ENCODE measurements at regions of chr2 and their contacts with region 1.

Region 1: DNA sequence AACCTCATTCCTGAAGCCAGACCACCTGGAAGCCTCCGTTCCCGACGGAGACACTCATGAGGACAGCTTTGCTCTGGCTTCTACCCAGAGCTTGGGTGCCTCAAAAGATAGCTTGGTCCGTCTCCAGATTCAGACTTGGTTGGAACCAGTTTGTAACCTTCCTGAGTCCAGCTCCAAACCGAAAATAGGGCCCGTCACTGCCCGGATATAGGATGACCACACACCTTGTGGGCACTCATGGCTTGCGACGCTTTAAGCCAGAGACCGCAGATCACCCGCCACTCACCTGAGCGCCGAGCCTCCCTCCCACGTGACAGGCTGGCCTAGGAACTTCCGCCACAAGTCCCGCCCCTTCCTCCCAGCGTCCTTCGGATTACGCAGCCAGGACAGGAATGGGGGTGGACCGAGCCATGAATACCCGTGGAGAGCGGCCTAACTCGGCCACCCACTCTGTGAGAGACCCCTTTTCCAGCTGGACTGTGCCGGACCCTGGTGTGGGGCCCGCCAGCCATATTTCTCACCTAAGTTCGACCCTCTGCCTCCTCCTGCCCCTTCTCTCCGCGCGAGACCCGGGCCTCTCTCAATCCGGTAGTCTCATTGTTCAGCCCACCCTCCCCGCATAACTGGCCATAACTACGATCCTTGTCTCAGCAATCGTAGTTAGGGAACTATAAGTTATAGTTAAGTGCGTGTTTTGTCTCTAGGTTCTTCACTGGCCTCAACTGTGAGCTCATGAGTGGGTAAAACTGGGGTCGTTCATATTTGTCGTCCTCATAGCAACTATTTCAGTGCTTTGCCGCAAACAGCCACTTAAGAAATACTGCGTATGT is at the start of gene MPV17:
- DNase-seq: peak; percentile 98
- H3K4me3 ChIP-seq: peak within 1 kb of the TSS; percentile 76 to 93
- H3K27ac ChIP-seq: peak within 1 kb of the TSS; percentile 90 to 98
- H3K4me1 ChIP-seq: peaks cover 9 to 23% of the 10 kb centered on the region in 2 experiments; a peak in 3 of 4 replicates
- H3K27me3 ChIP-seq: no peaks in the 10 kb centered on the region
- CTCF ChIP-seq: no peak
- EP300 ChIP-seq: no peak
- RAD21 ChIP-seq: no peak
- polyA plus RNA-seq, gene MPV17: 255 and 265 TPM in 2 replicates

Region 2: GRCh38 chr2:27209621-27210401 is 113.2 kb before region 1 on chr2:
- CTCF ChIA-PET with region 1: no interaction called
- POLR2A ChIA-PET with region 1: no interaction called
- DNase-seq: no peak
- H3K4me3 ChIP-seq: no peak overlapping the region
- H3K27ac ChIP-seq: peak overlapping the region in 1 of 2 experiments; percentile 25; a peak in 1 of 4 replicates
- H3K4me1 ChIP-seq: peaks cover 5 to 22% of the 10 kb centered on the region in 2 experiments; a peak in 2 of 4 replicates
- H3K27me3 ChIP-seq: no peaks in the 10 kb centered on the region
- CTCF ChIP-seq: no peak
- EP300 ChIP-seq: no peak
- RAD21 ChIP-seq: no peak

Region 3: DNA sequence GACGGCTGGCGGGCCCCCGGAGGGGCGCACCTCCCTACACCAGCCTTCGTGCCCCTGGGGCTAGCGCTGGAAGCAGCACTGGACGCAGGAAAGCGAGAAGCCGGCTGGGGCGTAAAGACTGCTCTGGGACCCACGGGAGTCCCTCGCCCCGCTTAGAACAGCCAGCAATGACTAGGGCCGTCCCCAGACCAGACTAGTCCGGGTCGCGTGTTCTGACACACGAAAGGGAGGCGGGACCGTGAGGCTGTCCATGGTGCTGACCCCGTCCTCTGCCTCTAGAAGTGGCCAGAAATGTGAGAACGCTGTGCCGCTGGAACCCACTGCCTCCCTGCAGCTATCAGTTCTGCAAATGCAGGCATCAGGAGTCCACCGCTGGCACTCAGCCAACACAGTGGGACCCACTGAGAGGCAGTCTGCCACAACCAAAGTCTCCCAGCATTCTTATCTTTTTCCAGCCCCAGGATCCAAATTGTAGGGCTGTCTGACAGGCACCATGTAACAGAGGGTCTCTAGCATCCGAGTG is 14.6 kb before region 1 on chr2 and contains the start of gene UCN:
- CTCF ChIA-PET with region 1: interaction called, 27 read pairs
- POLR2A ChIA-PET with region 1: interaction called, 6 read pairs
- DNase-seq: peak; percentile 82
- H3K4me3 ChIP-seq: no peak within 1 kb of the TSS; a peak in 1 of 4 replicates
- H3K27ac ChIP-seq: no peak within 1 kb of the TSS
- H3K4me1 ChIP-seq: peaks cover 0 to 18% of the 10 kb centered on the region in 2 experiments; a peak in 1 of 4 replicates
- H3K27me3 ChIP-seq: peaks cover 15% of the 10 kb centered on the region; the same call in 1 of the 2 replicates
- CTCF ChIP-seq: no peak
- EP300 ChIP-seq: no peak
- RAD21 ChIP-seq: no peak
- polyA plus RNA-seq, gene UCN: 2.8 and 2.9 TPM in 2 replicates

Region 4: GRCh38 chr2:27356382-27357181 is 33.6 kb after region 1 on chr2 and contains the start of gene GTF3C2:
- CTCF ChIA-PET with region 1: interaction called, 3 read pairs
- POLR2A ChIA-PET with region 1: interaction called, 16 read pairs
- DNase-seq: peak; percentile 97
- H3K4me3 ChIP-seq: peak within 1 kb of the TSS; percentile 87 to 93
- H3K27ac ChIP-seq: peak within 1 kb of the TSS; percentile 90 to 93
- H3K4me1 ChIP-seq: peaks cover 7 to 19% of the 10 kb centered on the region in 2 experiments; a peak in 3 of 4 replicates
- H3K27me3 ChIP-seq: no peaks in the 10 kb centered on the region
- CTCF ChIP-seq: no peak
- EP300 ChIP-seq: peak in 1 of 2 experiments; percentile 24; a peak in 1 of 4 replicates
- RAD21 ChIP-seq: no peak
- polyA plus RNA-seq, gene GTF3C2: 65.8 and 76.0 TPM in 2 replicates

Region 5: GRCh38 chr2:27370026-27370815 is 47.2 kb after region 1 on chr2 and contains the starts of genes EIF2B4 and SNX17:
- CTCF ChIA-PET with region 1: interaction called, 13 read pairs
- POLR2A ChIA-PET with region 1: interaction called, 5 read pairs
- DNase-seq: peak; percentile 98
- H3K4me3 ChIP-seq: peak within 1 kb of the TSS; percentile 94 to 99
- H3K27ac ChIP-seq: peak within 1 kb of the TSS; percentile 79 to 89
- H3K4me1 ChIP-seq: peaks cover 11 to 22% of the 10 kb centered on the region in 2 experiments; a peak in 3 of 4 replicates
- H3K27me3 ChIP-seq: no peaks in the 10 kb centered on the region
- CTCF ChIP-seq: peak; percentile 84
- EP300 ChIP-seq: no peak; a peak in 1 of 4 replicates
- RAD21 ChIP-seq: peak; percentile 55
- polyA plus RNA-seq, gene EIF2B4: 51.7 and 56.0 TPM in 2 replicates
- polyA plus RNA-seq, gene SNX17: 128 and 145 TPM in 2 replicates

Region 6: DNA sequence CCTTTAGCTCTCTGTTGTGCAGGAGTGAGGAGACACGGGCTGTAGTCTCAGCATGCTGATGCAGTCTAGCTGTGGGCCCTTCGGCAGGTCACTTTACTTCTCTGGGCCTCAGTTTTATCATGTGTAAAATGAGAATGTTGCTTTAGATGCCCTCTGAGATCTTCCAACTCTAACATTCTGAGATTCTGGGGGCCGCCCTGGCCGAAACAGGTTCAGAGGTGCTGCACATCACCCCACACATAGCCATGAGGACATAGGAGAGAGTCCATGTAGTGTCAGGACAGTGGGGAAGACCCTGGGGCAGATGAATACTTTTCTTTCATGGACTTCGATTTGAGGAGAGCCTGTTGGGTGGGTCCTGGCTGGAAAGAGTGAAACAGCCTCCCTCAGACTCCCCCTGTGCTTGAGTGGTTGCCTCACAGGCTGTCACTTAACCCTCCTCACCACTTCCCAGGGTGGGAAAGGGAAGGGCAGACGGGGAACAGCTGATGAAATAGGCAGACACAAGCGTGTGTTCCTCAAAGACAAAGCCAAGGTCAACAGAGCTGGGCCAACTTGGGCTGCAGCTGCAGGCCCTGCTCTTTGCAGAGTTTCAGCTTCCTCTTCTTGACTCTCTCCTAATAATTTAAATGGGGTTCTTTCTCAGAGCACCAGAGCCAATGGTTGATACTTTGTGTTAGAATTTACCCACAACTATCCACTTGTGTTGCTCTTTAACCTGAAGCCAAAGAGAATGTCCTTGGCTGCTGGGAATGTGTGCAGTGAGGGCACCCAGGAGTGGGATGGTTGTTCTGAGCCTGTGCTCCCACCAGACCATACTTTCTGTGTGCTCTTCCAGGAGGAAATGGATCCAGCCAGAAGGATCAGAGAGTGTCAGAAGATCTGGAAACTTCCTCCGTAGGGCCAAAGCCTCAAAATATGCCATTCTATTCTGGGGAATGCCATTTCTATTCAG is 433.8 kb after region 1 on chr2:
- CTCF ChIA-PET with region 1: no interaction called
- POLR2A ChIA-PET with region 1: no interaction called
- DNase-seq: no peak
- H3K4me3 ChIP-seq: no peak overlapping the region
- H3K27ac ChIP-seq: no peak overlapping the region
- H3K4me1 ChIP-seq: peaks cover 0 to 3% of the 10 kb centered on the region in 2 experiments; a peak in 1 of 4 replicates
- H3K27me3 ChIP-seq: no peaks in the 10 kb centered on the region
- CTCF ChIP-seq: no peak
- EP300 ChIP-seq: no peak
- RAD21 ChIP-seq: no peak